RWPE1 (cell line): ENCODE measurements at regions of chr7 and their contacts with region 1.

Region 1: DNA sequence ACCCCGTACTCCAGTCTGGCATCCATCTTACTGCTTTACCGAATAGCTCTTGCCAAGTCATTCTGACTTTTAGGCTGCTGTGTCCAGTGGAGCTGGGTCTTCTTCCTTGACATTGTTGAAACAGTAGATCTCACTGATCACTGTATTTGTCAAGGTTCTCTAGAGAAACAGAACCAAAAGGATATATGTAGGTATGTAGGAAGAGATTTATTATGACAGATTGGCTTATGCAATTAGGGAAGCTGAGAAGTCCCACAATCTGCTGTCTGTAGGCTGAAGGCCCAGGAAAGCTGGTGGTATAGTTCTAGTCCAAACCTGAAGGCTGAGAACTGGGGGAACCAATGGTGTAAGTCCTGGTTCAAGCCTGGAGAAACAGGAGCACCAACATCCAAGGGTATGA is 12.1 kb upstream of the PRRT4 start:
- DNase-seq: no peak
- H3K27ac ChIP-seq: no peak overlapping the region
- CTCF ChIP-seq: no peak

Region 2: DNA sequence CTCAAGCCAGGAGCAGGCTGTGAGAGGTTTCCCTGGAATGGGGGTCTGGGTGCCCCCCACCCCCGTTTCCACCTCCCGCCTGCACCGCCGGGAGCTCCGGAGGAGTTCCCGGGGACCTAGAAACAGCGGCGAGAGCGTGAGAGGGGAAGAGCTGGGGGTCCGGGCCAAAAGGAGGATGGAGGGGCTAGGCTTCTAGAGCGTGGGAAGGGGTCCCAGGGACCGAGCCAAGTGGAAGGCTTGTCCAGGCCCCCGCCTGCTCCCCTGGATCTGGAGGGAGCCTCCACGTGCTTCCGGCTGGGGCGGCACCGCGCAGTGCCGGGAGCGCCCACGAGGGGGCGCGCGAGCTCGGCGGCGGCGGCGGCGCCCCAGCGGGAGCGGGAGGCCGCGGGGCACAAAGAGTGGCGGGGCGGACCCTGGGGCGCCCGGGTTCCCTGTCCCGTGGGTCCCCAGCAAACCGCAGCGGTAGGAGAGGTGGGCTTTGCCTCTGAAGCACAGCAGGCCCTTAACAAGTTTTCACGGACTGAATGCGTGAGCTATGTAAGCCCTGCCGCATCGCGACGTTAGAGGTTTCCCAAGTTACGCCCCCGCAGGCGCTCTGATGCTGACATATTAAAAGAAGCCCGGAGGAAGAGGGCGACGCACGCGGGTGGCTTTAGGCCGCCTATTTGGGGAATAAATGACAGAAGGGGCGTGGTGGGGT is 237.9 kb before region 1 on chr7:
- CTCF ChIA-PET with region 1: no interaction called
- POLR2A ChIA-PET with region 1: no interaction called
- DNase-seq: peak; percentile 63
- H3K27ac ChIP-seq: no peak overlapping the region
- CTCF ChIP-seq: peak; percentile 100

Region 3: GRCh38 chr7:128387216-128388144 is 13.9 kb after region 1 on chr7:
- CTCF ChIA-PET with region 1: interaction called, 11 read pairs
- POLR2A ChIA-PET with region 1: no interaction called
- DNase-seq: peak; percentile 85
- H3K27ac ChIP-seq: 0 out of 2 replicates have a peak overlapping the region, but pooled peaks have one; percentile 4
- CTCF ChIP-seq: peak; percentile 96